ENCODE measurements at regions of chr13 and their contacts with region 1.

Region 1: DNA sequence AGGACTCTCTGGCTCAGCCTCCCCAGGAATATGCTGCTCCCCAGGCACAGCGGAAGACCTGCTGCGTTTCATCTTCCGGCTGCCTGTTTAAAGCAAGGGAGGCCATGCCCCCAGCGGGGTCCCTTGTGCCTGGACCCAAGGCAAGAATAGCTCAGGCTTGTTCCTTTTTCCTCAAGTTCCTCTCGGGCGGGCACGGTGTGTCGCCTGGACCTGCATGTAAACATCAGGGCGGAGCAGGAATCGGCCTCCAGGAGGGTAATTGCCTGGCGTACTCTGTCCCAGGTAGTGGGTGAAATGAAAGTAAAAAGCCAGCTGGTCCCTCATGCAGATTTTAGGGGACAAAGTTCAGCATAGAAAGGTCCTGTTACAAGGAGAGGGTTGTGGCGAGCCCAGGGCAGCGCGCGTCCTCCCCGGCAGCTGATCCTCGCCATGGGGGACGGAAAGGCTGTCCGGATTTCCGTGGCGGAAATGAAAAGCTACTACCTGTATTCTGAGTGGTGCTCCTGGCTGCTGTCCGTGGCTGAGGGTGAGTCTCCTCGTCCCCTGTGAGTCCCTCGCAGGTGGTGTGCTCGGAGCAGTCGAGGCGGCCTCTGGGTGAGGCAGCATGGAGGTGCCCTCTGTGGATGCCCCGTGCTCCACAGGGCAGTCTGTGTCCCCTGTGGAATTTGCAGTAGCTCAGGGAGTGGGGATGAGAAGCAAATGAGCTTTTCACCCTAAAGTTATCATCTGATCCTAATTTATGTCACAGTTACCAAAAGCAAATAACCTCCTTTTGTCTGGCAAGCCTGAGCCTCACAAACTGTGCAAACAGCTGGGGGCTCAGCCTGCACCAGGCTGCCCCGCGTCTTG is 16.2 kb downstream of the MCF2L start:
- DNase-seq: peak; percentile 82
- ATAC-seq: peak; percentile 85
- H3K4me3 ChIP-seq: peak overlapping the region; percentile 52 to 73 (median 58)
- H3K27ac ChIP-seq: peak overlapping the region; percentile 64
- H3K4me1 ChIP-seq: peaks cover 50% of the 10 kb centered on the region
- H3K27me3 ChIP-seq: no peaks in the 10 kb centered on the region
- CTCF ChIP-seq: 0 out of 2 replicates have a peak, but pooled peaks have one; percentile 8
- EP300 ChIP-seq: peak in 1 of 2 experiments; percentile 14; a peak in 1 of 4 replicates
- POLR2A ChIP-seq: peak in 1 of 2 experiments; percentile 59; a peak in 1 of 4 replicates
- RAD21 ChIP-seq: no peak

Region 2: GRCh38 chr13:112942689-112943308 is 42.4 kb before region 1 on chr13:
- CTCF ChIA-PET with region 1: interaction called, 3 read pairs
- POLR2A ChIA-PET with region 1: interaction called, 7 read pairs
- in situ Hi-C with region 1: no loop called
- intact Hi-C with region 1: loop called (anchors 1 kb)
- DNase-seq: peak; percentile 94
- ATAC-seq: peak; percentile 92
- H3K4me3 ChIP-seq: peak overlapping the region; percentile 42 to 72 (median 67)
- H3K27ac ChIP-seq: no peak overlapping the region
- H3K4me1 ChIP-seq: peaks cover 30% of the 10 kb centered on the region
- H3K27me3 ChIP-seq: no peaks in the 10 kb centered on the region; a peak in 1 of 5 replicates
- CTCF ChIP-seq: peak; percentile 99
- EP300 ChIP-seq: no peak
- POLR2A ChIP-seq: no peak; a peak in 1 of 4 replicates
- RAD21 ChIP-seq: peak; percentile 95

Region 3: GRCh38 chr13:112956571-112957294 is 28.4 kb before region 1 on chr13:
- CTCF ChIA-PET with region 1: no interaction called
- POLR2A ChIA-PET with region 1: interaction called, 17 read pairs
- in situ Hi-C with region 1: no loop called
- intact Hi-C with region 1: no loop called
- DNase-seq: peak; percentile 77
- ATAC-seq: peak; percentile 78
- H3K4me3 ChIP-seq: peak overlapping the region in 1 of 3 experiments; percentile 40; a peak in 2 of 6 replicates
- H3K27ac ChIP-seq: peak overlapping the region; percentile 63
- H3K4me1 ChIP-seq: peaks cover 85% of the 10 kb centered on the region
- H3K27me3 ChIP-seq: no peaks in the 10 kb centered on the region
- CTCF ChIP-seq: peak; percentile 49
- EP300 ChIP-seq: peak in 1 of 2 experiments; percentile 51; a peak in 2 of 4 replicates
- POLR2A ChIP-seq: peak in 1 of 2 experiments; percentile 40; a peak in 1 of 4 replicates
- RAD21 ChIP-seq: no peak

Region 4: DNA sequence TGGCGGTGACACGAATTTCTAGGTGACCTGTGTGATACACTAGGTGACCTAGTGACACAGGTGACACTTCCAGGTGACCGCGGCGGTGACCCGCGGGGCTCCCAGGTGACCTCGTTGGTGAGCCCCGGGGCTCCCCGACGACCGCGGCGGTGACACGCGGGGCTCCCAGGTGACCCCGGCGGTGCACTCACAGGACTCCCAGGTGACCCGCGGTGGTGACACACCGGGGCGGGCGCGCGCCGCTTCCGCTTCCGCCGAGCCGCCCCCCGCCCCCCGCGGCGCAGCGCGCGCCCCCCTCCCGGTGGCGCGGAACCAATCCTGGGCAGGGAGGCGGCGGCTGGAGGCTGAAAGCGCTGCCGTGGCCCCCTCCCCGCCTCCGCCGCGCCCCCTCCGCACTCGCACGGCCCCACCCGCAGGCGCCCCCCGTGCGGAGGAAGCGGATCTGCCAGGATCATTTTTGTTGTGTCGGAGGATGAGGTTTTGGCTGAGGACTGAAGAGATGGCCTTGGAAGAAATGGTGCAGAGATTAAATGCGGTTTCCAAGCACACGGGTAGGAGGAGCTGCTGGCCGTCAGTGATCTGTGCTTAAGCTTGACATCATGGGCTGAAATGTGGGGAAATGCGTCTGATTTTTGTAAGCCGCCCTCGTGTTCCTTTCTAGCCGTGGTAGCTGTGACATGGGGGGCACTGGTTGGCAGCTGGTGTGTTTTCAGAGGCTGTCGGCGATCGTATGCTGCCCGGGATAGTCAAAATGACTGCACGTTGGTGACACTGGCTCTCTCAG is 16.1 kb before region 1 on chr13 and contains the start of gene MCF2L:
- CTCF ChIA-PET with region 1: no interaction called
- POLR2A ChIA-PET with region 1: interaction called, 14 read pairs
- in situ Hi-C with region 1: no loop called
- intact Hi-C with region 1: loop called (anchors 1 kb)
- DNase-seq: peak; percentile 56
- ATAC-seq: peak; percentile 86
- H3K4me3 ChIP-seq: peak within 1 kb of the TSS; percentile 69 to 85 (median 83)
- H3K27ac ChIP-seq: peak within 1 kb of the TSS; percentile 56
- H3K4me1 ChIP-seq: peaks cover 43% of the 10 kb centered on the region
- H3K27me3 ChIP-seq: no peaks in the 10 kb centered on the region
- CTCF ChIP-seq: peak; percentile 59
- EP300 ChIP-seq: no peak
- POLR2A ChIP-seq: no peak
- RAD21 ChIP-seq: 0 out of 2 replicates have a peak, but pooled peaks have one; percentile 7
- total RNA-seq, gene MCF2L: 13.7 and 19.4 TPM in 2 replicates

Region 5: DNA sequence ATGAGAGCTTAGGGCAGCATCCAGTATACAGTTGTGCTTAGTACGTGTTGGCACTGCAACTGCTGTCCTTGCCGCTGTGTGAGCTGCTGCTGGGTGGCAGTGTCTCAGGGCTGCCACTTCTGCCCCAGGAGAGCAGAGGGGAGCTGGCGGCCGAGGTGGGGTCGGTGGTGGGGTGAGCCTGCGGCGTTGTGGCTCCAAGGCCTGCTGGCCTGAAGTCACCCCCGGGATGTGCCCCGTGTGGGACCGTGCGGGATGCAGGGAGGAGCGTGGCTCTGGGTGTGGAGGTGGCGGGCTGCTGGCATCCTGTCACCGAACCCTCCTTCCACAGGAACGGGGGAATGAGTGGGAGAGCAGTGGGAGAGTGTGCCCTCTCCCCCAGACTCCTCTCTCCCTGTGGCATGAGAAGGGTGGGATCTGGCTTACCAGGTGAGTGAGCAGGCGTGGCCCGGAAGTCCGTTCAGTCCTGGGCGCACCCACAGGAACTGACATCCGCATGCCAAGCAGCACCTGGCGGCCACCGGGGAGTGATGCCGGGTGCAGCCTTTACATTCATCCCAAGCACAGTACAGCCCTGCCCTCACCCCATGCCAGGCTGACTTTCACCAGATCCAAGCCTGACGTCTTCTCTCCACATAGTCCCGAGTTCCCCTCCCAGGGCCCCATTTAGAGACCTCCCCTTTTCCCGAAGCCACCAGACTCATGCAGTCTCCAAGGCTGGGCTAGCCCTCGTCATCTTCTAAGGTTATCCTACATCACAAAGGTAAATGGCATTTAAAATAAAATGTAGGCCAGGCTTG is 10.4 kb after region 1 on chr13:
- CTCF ChIA-PET with region 1: no interaction called
- POLR2A ChIA-PET with region 1: interaction called, 15 read pairs
- in situ Hi-C with region 1: no loop called
- intact Hi-C with region 1: no loop called
- DNase-seq: no peak
- ATAC-seq: no peak
- H3K4me3 ChIP-seq: no peak overlapping the region
- H3K27ac ChIP-seq: no peak overlapping the region
- H3K4me1 ChIP-seq: peaks cover 40% of the 10 kb centered on the region
- H3K27me3 ChIP-seq: no peaks in the 10 kb centered on the region
- CTCF ChIP-seq: no peak
- EP300 ChIP-seq: no peak
- POLR2A ChIP-seq: no peak
- RAD21 ChIP-seq: no peak

Region 6: GRCh38 chr13:113001241-113002140 is 16.3 kb after region 1 on chr13:
- CTCF ChIA-PET with region 1: no interaction called
- POLR2A ChIA-PET with region 1: interaction called, 15 read pairs
- in situ Hi-C with region 1: no loop called
- intact Hi-C with region 1: loop called (anchors 1 kb)
- DNase-seq: peak; percentile 47
- ATAC-seq: peak; percentile 82
- H3K4me3 ChIP-seq: peak overlapping the region; percentile 61 to 76 (median 64); a peak in 5 of 6 replicates
- H3K27ac ChIP-seq: peak overlapping the region; percentile 37
- H3K4me1 ChIP-seq: peaks cover 60% of the 10 kb centered on the region
- H3K27me3 ChIP-seq: no peaks in the 10 kb centered on the region
- CTCF ChIP-seq: peak; percentile 11; the same call in 1 of the 2 replicates
- EP300 ChIP-seq: no peak
- POLR2A ChIP-seq: no peak
- RAD21 ChIP-seq: no peak

Region 7: GRCh38 chr13:113022391-113023216 is 37.4 kb after region 1 on chr13:
- CTCF ChIA-PET with region 1: no interaction called
- POLR2A ChIA-PET with region 1: interaction called, 12 read pairs
- in situ Hi-C with region 1: no loop called
- intact Hi-C with region 1: loop called (anchors 5 kb)
- DNase-seq: peak; percentile 98
- ATAC-seq: peak; percentile 81
- H3K4me3 ChIP-seq: peak overlapping the region in 2 of 3 experiments; percentile 35 to 36; a peak in 3 of 6 replicates
- H3K27ac ChIP-seq: peak overlapping the region; percentile 85
- H3K4me1 ChIP-seq: peaks cover 46% of the 10 kb centered on the region
- H3K27me3 ChIP-seq: no peaks in the 10 kb centered on the region
- CTCF ChIP-seq: no peak
- EP300 ChIP-seq: peak; percentile 69 to 92; a peak in 3 of 4 replicates
- POLR2A ChIP-seq: peak in 1 of 2 experiments; percentile 47; a peak in 1 of 4 replicates
- RAD21 ChIP-seq: no peak

Region 8: GRCh38 chr13:113238536-113238935 is 253.4 kb after region 1 on chr13:
- CTCF ChIA-PET with region 1: no interaction called
- POLR2A ChIA-PET with region 1: no interaction called
- in situ Hi-C with region 1: no loop called
- intact Hi-C with region 1: no loop called
- DNase-seq: no peak
- ATAC-seq: no peak
- H3K4me3 ChIP-seq: no peak overlapping the region
- H3K27ac ChIP-seq: no peak overlapping the region
- H3K4me1 ChIP-seq: no peaks in the 10 kb centered on the region
- H3K27me3 ChIP-seq: no peaks in the 10 kb centered on the region
- CTCF ChIP-seq: no peak
- EP300 ChIP-seq: no peak
- POLR2A ChIP-seq: no peak
- RAD21 ChIP-seq: no peak

Region 9: GRCh38 chr13:114148521-114148855 is 1163.3 kb after region 1 on chr13:
- CTCF ChIA-PET with region 1: no interaction called
- POLR2A ChIA-PET with region 1: no interaction called
- in situ Hi-C with region 1: no loop called
- intact Hi-C with region 1: no loop called
- DNase-seq: no peak
- ATAC-seq: no peak
- H3K4me3 ChIP-seq: no peak overlapping the region
- H3K27ac ChIP-seq: no peak overlapping the region
- H3K4me1 ChIP-seq: no peaks in the 10 kb centered on the region
- H3K27me3 ChIP-seq: peaks cover 10 to 57% of the 10 kb centered on the region in 2 experiments; a peak in 4 of 5 replicates
- CTCF ChIP-seq: no peak
- EP300 ChIP-seq: no peak
- POLR2A ChIP-seq: no peak
- RAD21 ChIP-seq: no peak